ENCODE measurements at regions of chr22 and their contacts with region 1.

Region 1: GRCh38 chr22:23098718-23099530 is 28.6 kb downstream of the GNAZ start:
- DNase-seq: peak; percentile 78 to 95 (median 92)
- H3K4me3 ChIP-seq: no peak overlapping the region
- H3K27ac ChIP-seq: peak overlapping the region; percentile 81 to 93
- H3K4me1 ChIP-seq: peaks cover 33% of the 10 kb centered on the region
- H3K27me3 ChIP-seq: no peaks in the 10 kb centered on the region
- CTCF ChIP-seq: no peak
- EP300 ChIP-seq: no peak
- POLR2A ChIP-seq: no peak

Region 2: DNA sequence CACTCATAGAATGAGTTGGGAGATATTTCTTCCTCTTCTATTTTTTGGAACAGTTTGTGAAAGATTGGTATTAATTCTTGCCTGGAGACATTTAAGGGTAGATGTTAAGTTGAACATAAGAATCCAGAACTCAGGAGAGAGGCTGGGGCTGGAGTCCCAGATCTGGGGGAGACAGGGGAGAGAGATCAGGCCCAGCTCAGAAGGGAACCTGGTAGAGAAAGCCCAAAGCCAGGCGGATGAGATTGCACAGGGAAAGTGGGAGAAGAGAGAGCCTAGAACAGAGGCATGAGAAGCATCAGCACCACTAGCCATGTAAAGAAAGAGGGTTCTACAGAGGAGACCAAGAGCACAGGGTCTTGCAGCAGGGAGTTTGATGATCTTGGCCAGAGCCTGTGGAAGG is 41.6 kb before region 1 on chr22:
- intact Hi-C with region 1: loop called in 1 of 4 experiments (anchors 1 kb)
- DNase-seq: no peak
- H3K4me3 ChIP-seq: no peak overlapping the region
- H3K27ac ChIP-seq: no peak overlapping the region
- H3K4me1 ChIP-seq: no peaks in the 10 kb centered on the region
- H3K27me3 ChIP-seq: no peaks in the 10 kb centered on the region
- CTCF ChIP-seq: no peak
- EP300 ChIP-seq: no peak
- POLR2A ChIP-seq: no peak

Measured in ovary (tissue), 10 donors.